ENCODE measurements at regions of chr20 and their contacts with region 1.

Region 1: GRCh38 chr20:38321959-38322598 is 18.1 kb downstream of the BPI start:
- DNase-seq: peak; percentile 64
- H3K4me3 ChIP-seq: no peak overlapping the region
- CTCF ChIP-seq: peak; percentile 71

Region 2: DNA sequence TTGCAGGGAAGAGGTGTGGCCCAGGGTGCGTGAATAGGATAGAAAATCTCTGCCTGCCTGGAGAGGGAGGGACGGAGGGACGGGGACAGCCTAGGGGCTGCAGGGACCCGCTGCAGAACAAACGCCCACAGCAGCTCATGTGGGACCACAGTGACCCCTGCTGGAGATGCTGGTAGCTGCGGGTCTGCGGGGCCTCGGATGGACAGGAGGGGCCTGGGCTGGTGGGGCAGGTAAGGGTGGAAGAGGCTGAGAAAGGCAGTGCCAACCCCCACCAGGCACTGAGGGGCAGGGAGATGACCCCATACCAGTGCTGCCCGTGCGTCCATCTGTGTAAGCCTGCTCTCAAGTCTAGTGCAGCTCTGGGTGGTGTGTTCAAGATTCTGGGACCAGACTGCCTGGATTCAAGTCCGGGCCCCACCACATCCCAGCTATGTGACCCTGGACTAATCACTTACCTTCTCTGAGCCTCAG is 100.9 kb before region 1 on chr20:
- in situ Hi-C with region 1: loop called (anchors 5 kb)
- DNase-seq: no peak
- H3K4me3 ChIP-seq: no peak overlapping the region
- CTCF ChIP-seq: peak; percentile 94

Region 3: GRCh38 chr20:38406476-38406875 is 84.4 kb after region 1 on chr20:
- in situ Hi-C with region 1: no loop called
- DNase-seq: no peak
- H3K4me3 ChIP-seq: no peak overlapping the region
- CTCF ChIP-seq: no peak